OCI-LY7 (cell line): ENCODE measurements at regions of chr6 and their contacts with region 1.

Region 1: GRCh38 chr6:19851241-19852089 is 14.3 kb downstream of the ID4 start:
- DNase-seq: peak; percentile 72
- H3K4me3 ChIP-seq: no peak overlapping the region
- H3K27ac ChIP-seq: no peak overlapping the region
- H3K4me1 ChIP-seq: peaks cover 39% of the 10 kb centered on the region
- CTCF ChIP-seq: peak; percentile 97

Region 2: GRCh38 chr6:19024737-19025136 is 826.7 kb before region 1 on chr6:
- CTCF ChIA-PET with region 1: no interaction called
- POLR2A ChIA-PET with region 1: no interaction called
- intact Hi-C with region 1: loop called (anchors 10 kb)
- DNase-seq: peak; percentile 41
- H3K4me3 ChIP-seq: no peak overlapping the region
- H3K27ac ChIP-seq: no peak overlapping the region
- H3K4me1 ChIP-seq: no peaks in the 10 kb centered on the region
- CTCF ChIP-seq: peak; percentile 77

Region 3: GRCh38 chr6:19472847-19473246 is 378.6 kb before region 1 on chr6:
- CTCF ChIA-PET with region 1: no interaction called
- POLR2A ChIA-PET with region 1: no interaction called
- intact Hi-C with region 1: loop called (anchors 2 kb)
- DNase-seq: peak; percentile 51
- H3K4me3 ChIP-seq: no peak overlapping the region
- H3K27ac ChIP-seq: no peak overlapping the region
- H3K4me1 ChIP-seq: no peaks in the 10 kb centered on the region
- CTCF ChIP-seq: peak; percentile 83

Region 4: GRCh38 chr6:19812512-19813119 is 38.8 kb before region 1 on chr6:
- CTCF ChIA-PET with region 1: no interaction called
- POLR2A ChIA-PET with region 1: interaction called, 3 read pairs
- intact Hi-C with region 1: loop called (anchors 1 kb)
- DNase-seq: peak; percentile 69
- H3K4me3 ChIP-seq: no peak overlapping the region
- H3K27ac ChIP-seq: no peak overlapping the region
- H3K4me1 ChIP-seq: peaks cover 9% of the 10 kb centered on the region
- CTCF ChIP-seq: peak; percentile 92